ENCODE measurements at regions of chr16 and their contacts with region 1.

Region 1: DNA sequence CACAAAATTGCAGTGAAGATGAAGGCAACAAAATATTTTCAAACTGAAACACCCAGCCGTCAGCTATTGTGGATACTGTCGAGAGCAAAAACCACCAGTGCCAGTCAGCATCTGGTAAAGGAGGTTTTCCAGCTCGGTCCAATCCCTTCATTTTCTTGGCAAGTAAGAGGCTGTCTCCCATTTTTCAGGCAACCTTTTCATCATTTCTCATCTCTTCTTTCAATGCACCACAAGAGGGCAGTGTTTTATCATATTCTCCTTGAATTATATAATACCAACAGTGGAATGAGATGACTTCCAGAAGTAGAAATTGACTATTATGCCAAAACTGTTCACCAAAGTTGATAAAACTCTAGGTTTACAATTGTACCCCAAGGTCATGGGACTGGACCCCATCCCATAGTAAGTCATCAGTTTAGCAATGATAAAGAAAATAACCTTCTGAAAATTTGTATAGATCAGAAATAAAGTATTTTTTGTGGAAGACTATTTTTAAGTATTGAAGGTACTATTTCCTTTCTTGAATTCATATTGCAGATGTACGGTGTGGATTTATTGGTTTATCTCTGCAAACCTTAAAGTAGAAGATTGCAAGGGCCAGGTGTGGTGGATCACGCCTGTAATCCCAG is 16.8 kb downstream of the NQO1 start:
- DNase-seq: no peak
- H3K4me3 Mint-ChIP-seq: no peak overlapping the region
- H3K27ac Mint-ChIP-seq: no peak overlapping the region
- H3K4me1 Mint-ChIP-seq: peaks cover 8% of the 10 kb centered on the region
- H3K27me3 Mint-ChIP-seq: no peaks in the 10 kb centered on the region

Region 2: DNA sequence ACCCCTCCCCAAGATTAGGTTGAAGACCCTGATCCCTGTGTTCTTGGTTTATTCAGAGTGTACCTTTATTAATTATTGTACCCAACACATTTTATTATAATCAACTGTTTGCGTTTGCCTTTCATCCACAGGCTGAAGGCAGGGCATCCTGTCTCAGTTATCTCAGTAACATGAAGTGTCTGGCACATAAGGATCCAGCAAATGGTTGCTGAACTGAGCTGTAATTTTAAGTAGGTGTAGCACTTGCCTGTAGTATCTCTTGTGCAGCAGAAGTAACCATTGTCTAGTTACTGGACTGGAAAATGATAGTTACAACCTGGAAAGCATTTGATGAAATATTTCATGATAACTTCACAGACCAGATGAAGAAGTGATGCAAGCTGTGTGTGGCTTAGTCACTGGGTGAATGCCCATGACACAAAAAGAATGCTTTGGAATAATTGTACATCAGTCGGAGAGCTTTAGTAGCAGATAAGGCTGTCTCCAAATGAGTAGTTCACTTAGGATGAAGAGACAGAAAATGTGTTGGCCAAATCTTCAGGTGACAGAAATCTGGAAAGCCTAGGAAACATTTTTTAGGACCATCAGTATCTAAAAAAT is 1530.3 kb before region 1 on chr16:
- CTCF ChIA-PET with region 1: no interaction called
- intact Hi-C with region 1: no loop called
- DNase-seq: no peak
- H3K4me3 Mint-ChIP-seq: no peak overlapping the region
- H3K27ac Mint-ChIP-seq: no peak overlapping the region
- H3K4me1 Mint-ChIP-seq: peaks cover 12% of the 10 kb centered on the region
- H3K27me3 Mint-ChIP-seq: no peaks in the 10 kb centered on the region

Region 3: DNA sequence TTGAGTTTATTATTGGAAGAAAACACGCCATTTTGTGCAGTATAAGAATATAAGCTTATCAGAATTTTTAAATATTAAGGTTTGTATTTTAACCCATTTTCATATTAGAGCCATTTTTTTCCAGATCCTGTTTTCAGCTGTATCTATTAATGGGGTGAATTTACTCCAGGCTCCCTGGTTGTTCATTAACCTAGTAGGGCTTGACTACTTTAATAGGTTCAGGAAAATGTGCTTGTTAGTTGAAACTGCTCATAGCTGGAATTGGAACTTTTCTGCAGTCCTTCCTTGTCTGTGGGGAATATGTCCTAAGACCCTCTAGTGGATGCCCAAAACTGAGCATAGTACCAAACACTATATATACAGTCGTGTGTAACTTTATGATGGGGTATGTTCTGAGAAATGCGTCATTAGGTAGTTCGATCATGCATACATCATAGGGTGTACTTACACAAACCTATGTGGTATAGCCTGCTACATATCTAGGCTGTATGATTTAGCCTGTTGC is 115.8 kb before region 1 on chr16:
- CTCF ChIA-PET with region 1: no interaction called
- intact Hi-C with region 1: no loop called
- DNase-seq: no peak
- H3K4me3 Mint-ChIP-seq: no peak overlapping the region
- H3K27ac Mint-ChIP-seq: no peak overlapping the region
- H3K4me1 Mint-ChIP-seq: peaks cover 49% of the 10 kb centered on the region
- H3K27me3 Mint-ChIP-seq: no peaks in the 10 kb centered on the region

Region 4: DNA sequence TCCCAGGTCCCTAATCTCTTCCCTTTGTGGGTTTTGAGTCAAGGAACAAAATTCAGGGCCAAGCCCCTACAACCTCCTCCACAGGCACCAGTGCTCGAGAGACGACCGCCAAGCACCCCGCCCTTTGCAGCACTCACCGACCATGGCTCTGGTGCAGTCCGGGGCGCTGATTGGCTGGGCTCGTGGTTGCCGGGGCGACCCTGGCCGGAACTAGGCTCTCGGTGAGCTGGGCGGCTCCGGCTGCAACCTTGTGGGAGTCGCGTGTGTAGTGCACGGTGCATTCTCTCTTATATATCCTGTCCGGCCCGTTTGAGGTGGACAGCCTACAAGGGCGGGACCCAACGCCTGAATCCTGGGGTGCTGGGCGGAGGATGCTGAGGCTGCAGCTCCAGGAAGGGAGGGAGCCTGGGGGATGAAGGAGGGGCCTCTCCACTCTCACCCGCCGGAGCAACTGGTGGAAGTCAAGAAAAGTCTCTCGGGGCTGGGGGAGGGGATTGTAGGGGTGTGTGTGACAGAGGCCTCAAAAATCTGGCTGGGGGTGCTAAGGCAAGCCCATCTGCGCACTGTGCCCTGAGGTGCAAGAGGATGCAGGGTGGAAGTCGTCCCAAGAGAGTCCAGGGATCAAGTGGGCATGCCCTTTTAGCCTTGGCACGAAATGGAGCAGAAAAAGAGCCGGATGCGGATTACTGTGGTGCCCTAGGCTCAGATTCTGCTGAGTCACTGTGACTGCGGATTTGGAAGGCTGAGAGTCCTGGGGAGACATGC is 16.9 kb after region 1 on chr16 and contains the start of gene NQO1:
- CTCF ChIA-PET with region 1: interaction called, 16 read pairs
- intact Hi-C with region 1: no loop called
- DNase-seq: peak; percentile 95
- H3K4me3 Mint-ChIP-seq: peak within 1 kb of the TSS; percentile 99
- H3K27ac Mint-ChIP-seq: peak within 1 kb of the TSS; percentile 92
- H3K4me1 Mint-ChIP-seq: peaks cover 27% of the 10 kb centered on the region
- H3K27me3 Mint-ChIP-seq: no peaks in the 10 kb centered on the region
- total RNA-seq, gene NQO1: 11.6 to 11.9 TPM

Region 5: DNA sequence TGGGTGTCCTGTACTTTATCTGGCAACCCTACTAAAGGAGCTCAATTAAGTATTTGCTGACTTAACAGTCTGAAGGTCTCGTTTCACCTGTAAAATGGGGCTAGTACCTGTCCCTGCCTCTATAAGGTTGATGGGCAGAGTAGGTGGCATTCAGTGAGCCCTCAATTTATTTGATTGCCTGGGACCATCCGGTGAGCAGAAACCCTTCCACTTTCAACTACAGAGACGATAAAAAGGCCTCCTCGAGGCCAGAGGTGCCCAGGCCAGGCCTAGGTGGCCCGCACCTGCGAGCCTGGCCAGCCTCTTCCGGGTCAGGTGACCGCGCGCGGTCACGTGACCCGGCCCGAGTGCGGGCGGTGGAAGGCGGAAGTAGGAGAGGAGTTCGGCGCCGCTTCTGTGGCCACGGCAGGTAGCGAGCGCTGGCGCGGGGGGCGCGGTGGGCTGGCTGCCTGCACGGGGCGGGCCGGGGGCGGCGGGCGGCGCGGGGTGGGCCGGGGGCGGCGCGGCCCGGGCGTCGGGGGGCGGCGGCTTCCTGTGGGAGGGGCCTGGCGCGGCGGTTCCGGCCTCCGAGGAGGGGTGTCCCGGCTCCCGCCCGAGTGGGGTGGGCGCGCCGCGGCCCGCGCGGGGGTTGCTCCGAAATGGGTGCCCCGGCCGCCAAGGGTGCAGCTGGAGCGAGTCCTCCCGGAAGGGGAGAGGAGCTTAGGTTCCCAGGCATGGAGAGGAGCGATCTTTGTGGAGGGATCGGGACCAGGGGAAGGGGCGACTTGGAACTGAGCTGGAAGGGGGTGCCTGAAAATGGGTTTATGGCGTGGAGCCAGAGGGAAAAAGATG is 52.6 kb after region 1 on chr16 and contains the start of gene WWP2:
- CTCF ChIA-PET with region 1: no interaction called
- intact Hi-C with region 1: loop called (anchors 2 kb)
- DNase-seq: peak; percentile 78
- H3K4me3 Mint-ChIP-seq: peak within 1 kb of the TSS; percentile 97
- H3K27ac Mint-ChIP-seq: peak within 1 kb of the TSS; percentile 93
- H3K4me1 Mint-ChIP-seq: peaks cover 33% of the 10 kb centered on the region
- H3K27me3 Mint-ChIP-seq: no peaks in the 10 kb centered on the region
- total RNA-seq, gene WWP2: 27.7 to 32.3 TPM